Calu3 (cell line): ENCODE measurements at regions of chr3 and their contacts with region 1.

Region 1: GRCh38 chr3:64213962-64214379 is 11.3 kb downstream of the PRICKLE2 start:
- DNase-seq: peak; percentile 56
- H3K4me3 Mint-ChIP-seq: peak overlapping the region; percentile 50
- H3K27ac Mint-ChIP-seq: peak overlapping the region; percentile 71
- H3K4me1 Mint-ChIP-seq: peaks cover 18% of the 10 kb centered on the region
- H3K27me3 Mint-ChIP-seq: no peaks in the 10 kb centered on the region
- CTCF ChIP-seq: no peak

Region 2: DNA sequence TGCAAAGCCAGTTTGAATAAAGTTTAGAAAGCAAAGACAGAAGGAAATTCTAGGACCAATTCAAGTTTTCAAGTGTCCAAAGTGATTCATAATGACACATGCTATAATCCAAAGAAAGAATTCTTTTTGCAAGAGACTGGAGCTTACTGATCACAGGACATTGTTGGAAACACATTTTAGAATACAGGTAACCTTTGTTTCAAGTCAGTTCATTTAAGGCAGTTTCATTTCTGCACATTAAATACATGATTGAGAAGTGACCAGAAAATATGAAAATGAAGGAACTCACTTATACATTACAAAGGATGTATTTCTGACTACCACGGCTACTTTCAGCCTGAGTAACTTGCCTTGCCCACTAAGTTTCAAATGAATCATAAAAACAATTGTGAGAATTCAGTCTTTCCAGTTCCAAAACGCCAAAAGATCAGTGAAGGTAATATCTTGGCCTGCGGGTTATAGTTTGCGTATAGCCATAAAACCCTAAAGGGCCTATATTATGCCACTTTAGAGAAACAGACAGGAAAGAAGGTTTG is 37.4 kb before region 1 on chr3:
- CTCF ChIA-PET with region 1: no interaction called
- intact Hi-C with region 1: loop called (anchors 5 kb)
- DNase-seq: no peak
- H3K4me3 Mint-ChIP-seq: no peak overlapping the region
- H3K27ac Mint-ChIP-seq: no peak overlapping the region
- H3K4me1 Mint-ChIP-seq: peaks cover 33% of the 10 kb centered on the region
- H3K27me3 Mint-ChIP-seq: no peaks in the 10 kb centered on the region
- CTCF ChIP-seq: no peak